Caco-2 (cell line): ENCODE measurements at regions of chr11 and their contacts with region 1.

Region 1: DNA sequence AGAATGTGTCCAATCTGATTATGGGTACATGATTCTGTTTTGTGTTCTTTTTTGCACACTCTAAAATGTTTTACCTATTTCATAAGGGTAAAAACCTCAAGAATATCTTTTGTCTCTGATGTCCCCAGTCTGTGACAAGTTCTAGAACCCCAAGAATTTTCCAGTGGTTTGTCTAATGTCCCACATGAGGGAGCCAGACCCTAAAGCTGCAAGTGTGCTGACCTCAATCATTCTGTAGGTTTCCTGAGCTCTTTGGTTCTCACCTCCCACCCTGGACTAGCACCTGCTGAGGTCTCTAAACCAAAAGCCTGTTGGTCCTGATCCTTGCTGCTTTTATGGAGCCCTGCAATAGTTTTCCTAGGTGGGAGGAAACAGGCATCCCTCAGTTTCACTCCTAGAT is 149.8 kb upstream of the MPPED2 start:
- DNase-seq: no peak
- H3K4me3 ChIP-seq: no peak overlapping the region
- H3K4me3 Mint-ChIP-seq: no peak overlapping the region
- H3K27ac Mint-ChIP-seq: no peak overlapping the region
- H3K4me1 ChIP-seq: peaks cover 2% of the 10 kb centered on the region; the same call in 1 of the 2 replicates
- H3K4me1 Mint-ChIP-seq: no peaks in the 10 kb centered on the region
- H3K27me3 ChIP-seq: no peaks in the 10 kb centered on the region
- H3K27me3 Mint-ChIP-seq: peaks cover 3% of the 10 kb centered on the region
- CTCF ChIP-seq: no peak

Region 2: DNA sequence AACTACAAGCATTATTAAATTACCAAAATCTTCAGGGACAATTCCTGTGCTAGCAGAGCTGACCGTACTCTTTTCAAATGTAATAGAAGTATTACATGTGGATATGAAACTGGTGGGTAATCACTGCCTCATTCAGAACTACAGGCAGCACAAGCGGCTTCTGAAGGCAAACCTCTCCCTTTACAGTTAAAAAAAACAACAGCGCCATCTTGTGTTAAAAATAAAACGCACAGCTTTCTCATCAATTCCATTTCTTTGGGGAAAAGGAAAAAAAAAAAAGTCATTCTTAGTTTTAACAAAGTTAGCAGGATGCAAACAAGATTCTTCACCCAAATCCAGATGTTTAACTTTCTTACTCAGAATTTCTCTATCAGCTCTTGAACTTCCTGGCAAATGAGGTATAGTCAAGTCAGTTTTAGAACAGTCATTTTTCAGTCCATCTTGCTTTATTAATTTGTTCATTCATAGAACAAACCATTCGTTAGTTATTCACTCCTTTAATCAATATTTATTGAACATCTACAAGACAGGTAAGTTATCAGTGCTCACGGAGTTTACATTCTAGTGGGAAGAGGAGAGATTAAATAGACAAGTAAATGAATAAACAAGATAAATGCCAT is 182.0 kb after region 1 on chr11:
- CTCF ChIA-PET with region 1: no interaction called
- POLR2A ChIA-PET with region 1: no interaction called
- intact Hi-C with region 1: loop called (anchors 10 kb)
- DNase-seq: peak in 1 of 2 experiments; percentile 61
- H3K4me3 ChIP-seq: no peak overlapping the region
- H3K4me3 Mint-ChIP-seq: no peak overlapping the region
- H3K27ac Mint-ChIP-seq: no peak overlapping the region
- H3K4me1 ChIP-seq: no peaks in the 10 kb centered on the region
- H3K4me1 Mint-ChIP-seq: no peaks in the 10 kb centered on the region
- H3K27me3 ChIP-seq: no peaks in the 10 kb centered on the region; the same call in 1 of the 2 replicates
- H3K27me3 Mint-ChIP-seq: peaks cover 20% of the 10 kb centered on the region
- CTCF ChIP-seq: peak; percentile 55 to 75